ENCODE measurements at regions of chr4 and their contacts with region 1.

Region 1: DNA sequence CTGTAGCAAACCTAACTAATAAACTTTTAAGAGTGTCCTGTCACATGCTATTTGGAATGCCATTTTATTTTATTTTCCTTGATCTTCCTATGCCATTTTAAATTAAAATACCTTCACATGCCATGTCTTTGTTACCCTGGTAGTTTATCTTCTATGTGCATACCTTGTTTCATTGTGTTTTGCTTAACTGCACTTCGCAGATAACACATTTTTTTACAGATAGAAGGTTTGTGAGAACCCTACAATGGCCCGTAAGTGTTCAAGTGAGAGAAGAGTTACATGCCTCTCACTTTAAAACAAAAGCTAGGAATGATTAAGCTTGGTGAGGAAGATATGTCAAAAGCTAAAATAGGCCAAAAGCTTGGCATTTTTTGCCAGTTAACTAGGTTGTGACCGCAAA is 744.1 kb downstream of the STIM2 start:
- DNase-seq: no peak
- ATAC-seq: no peak
- H3K4me3 ChIP-seq: no peak overlapping the region
- H3K27ac ChIP-seq: no peak overlapping the region
- H3K4me1 ChIP-seq: no peaks in the 10 kb centered on the region
- H3K27me3 ChIP-seq: no peaks in the 10 kb centered on the region
- CTCF ChIP-seq: no peak

Region 2: GRCh38 chr4:27592738-27593137 is 12.0 kb before region 1 on chr4:
- intact Hi-C with region 1: loop called in 1 of 10 experiments (anchors 1 kb)
- DNase-seq: no peak
- ATAC-seq: no peak
- H3K4me3 ChIP-seq: no peak overlapping the region
- H3K27ac ChIP-seq: no peak overlapping the region
- H3K4me1 ChIP-seq: no peaks in the 10 kb centered on the region
- H3K27me3 ChIP-seq: no peaks in the 10 kb centered on the region
- CTCF ChIP-seq: no peak

Region 3: GRCh38 chr4:27620874-27621273 is 16.2 kb after region 1 on chr4:
- intact Hi-C with region 1: no loop called
- DNase-seq: no peak
- ATAC-seq: no peak
- H3K4me3 ChIP-seq: no peak overlapping the region
- H3K27ac ChIP-seq: no peak overlapping the region
- H3K4me1 ChIP-seq: no peaks in the 10 kb centered on the region
- H3K27me3 ChIP-seq: no peaks in the 10 kb centered on the region
- CTCF ChIP-seq: no peak